B cell (primary cell): ENCODE measurements at regions of chr1 and their contacts with region 1.

Region 1: GRCh38 chr1:37692078-37692833 is at the start of gene CDCA8:
- DNase-seq: peak; percentile 99
- ATAC-seq: peak; percentile 89
- H3K4me3 ChIP-seq: peak within 1 kb of the TSS; percentile 52 to 91 (median 74)
- H3K4me3 Mint-ChIP-seq: peak within 1 kb of the TSS; percentile 99
- H3K27ac ChIP-seq: peak within 1 kb of the TSS; percentile 19 to 65
- H3K27ac Mint-ChIP-seq: peak within 1 kb of the TSS; percentile 94
- H3K4me1 ChIP-seq: peaks cover 19 to 34% of the 10 kb centered on the region in 2 donors
- H3K4me1 Mint-ChIP-seq: peaks cover 40% of the 10 kb centered on the region
- H3K27me3 ChIP-seq: no peaks in the 10 kb centered on the region
- H3K27me3 Mint-ChIP-seq: no peaks in the 10 kb centered on the region
- CTCF ChIP-seq: peak; percentile 67
- total RNA-seq, gene CDCA8: 1.3 and 1.5 TPM in 2 replicates

Region 2: GRCh38 chr1:37553927-37554808 is 138.1 kb before region 1 on chr1 and contains the start of gene SNIP1:
- CTCF ChIA-PET with region 1: no interaction called
- POLR2A ChIA-PET with region 1: interaction called, 8 read pairs
- intact Hi-C with region 1: loop called (anchors 1 kb)
- DNase-seq: peak; percentile 94
- ATAC-seq: peak; percentile 98
- H3K4me3 ChIP-seq: peak within 1 kb of the TSS; percentile 75 to 99 (median 93)
- H3K4me3 Mint-ChIP-seq: peak within 1 kb of the TSS; percentile 98
- H3K27ac ChIP-seq: peak within 1 kb of the TSS; percentile 82 to 96
- H3K27ac Mint-ChIP-seq: peak within 1 kb of the TSS; percentile 97
- H3K4me1 ChIP-seq: peaks cover 13 to 19% of the 10 kb centered on the region in 2 donors
- H3K4me1 Mint-ChIP-seq: peaks cover 33% of the 10 kb centered on the region
- H3K27me3 ChIP-seq: peaks cover 0 to 3% (median 0%) of the 10 kb centered on the region in 4 experiments
- H3K27me3 Mint-ChIP-seq: peaks cover 5% of the 10 kb centered on the region
- CTCF ChIP-seq: no peak
- total RNA-seq, gene SNIP1: 45.0 and 45.1 TPM in 2 replicates

Region 3: DNA sequence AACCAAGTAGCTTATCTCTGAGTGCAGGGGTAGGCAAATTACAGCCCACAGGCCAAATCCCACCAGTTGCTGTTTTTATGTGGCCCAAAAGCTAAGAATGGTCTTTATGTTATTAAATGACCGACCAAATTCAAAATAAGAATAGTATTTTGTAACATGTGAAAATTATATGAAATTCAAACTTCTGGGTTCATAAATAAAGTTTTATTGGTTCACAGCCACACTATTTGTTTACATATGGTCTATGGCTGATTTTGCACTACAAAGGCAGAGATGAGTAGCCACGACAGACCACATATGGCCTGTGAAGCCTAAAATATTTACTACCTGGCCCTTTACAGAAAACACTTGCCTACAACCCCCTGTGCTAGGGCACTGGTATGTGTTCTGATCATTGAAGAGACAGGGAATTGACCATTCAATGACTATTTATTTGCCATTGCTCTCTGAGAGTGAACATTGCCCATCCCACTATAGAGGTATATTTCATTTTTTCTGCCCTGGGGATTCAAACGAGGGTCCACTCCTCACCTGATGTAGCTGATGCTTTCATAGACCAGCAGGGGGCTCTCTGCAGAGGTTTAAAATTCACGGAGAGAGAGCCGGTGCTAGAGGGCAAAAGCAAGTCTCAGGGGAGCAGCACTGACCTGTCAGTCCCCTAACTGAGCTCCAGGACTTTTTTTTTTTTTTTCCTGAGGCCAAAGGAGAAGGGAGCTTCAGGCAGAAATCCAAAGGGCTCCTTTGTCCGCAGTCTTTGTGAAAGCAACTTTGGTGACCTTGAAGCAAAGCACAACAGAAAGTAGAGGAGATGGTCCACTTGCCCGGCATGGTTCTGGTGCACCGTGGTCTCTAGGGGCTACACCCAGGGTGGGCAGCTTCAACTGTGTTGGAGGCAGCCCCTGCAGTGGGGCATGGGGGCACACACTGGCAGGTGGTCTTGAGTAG is 89.2 kb before region 1 on chr1:
- CTCF ChIA-PET with region 1: interaction called, 328 read pairs
- POLR2A ChIA-PET with region 1: no interaction called
- intact Hi-C with region 1: no loop called
- DNase-seq: peak; percentile 66
- ATAC-seq: peak; percentile 64
- H3K4me3 ChIP-seq: no peak overlapping the region
- H3K4me3 Mint-ChIP-seq: no peak overlapping the region
- H3K27ac ChIP-seq: no peak overlapping the region
- H3K27ac Mint-ChIP-seq: no peak overlapping the region
- H3K4me1 ChIP-seq: peaks cover 4% of the 10 kb centered on the region in 2 donors
- H3K4me1 Mint-ChIP-seq: no peaks in the 10 kb centered on the region
- H3K27me3 ChIP-seq: peaks cover 0 to 3% (median 1%) of the 10 kb centered on the region in 4 experiments
- H3K27me3 Mint-ChIP-seq: peaks cover 12% of the 10 kb centered on the region
- CTCF ChIP-seq: peak; percentile 83

Region 4: GRCh38 chr1:37807555-37808368 is 115.5 kb after region 1 on chr1 and contains the starts of genes C1orf122 and YRDC:
- CTCF ChIA-PET with region 1: no interaction called
- POLR2A ChIA-PET with region 1: interaction called, 3 read pairs
- intact Hi-C with region 1: loop called (anchors 1 kb)
- DNase-seq: peak; percentile 91
- ATAC-seq: peak; percentile 90
- H3K4me3 ChIP-seq: peak within 1 kb of the TSS; percentile 78 to 88 (median 83)
- H3K4me3 Mint-ChIP-seq: peak within 1 kb of the TSS; percentile 98
- H3K27ac ChIP-seq: peak within 1 kb of the TSS; percentile 68 to 94
- H3K27ac Mint-ChIP-seq: peak within 1 kb of the TSS; percentile 98
- H3K4me1 ChIP-seq: peaks cover 14 to 31% of the 10 kb centered on the region in 2 donors
- H3K4me1 Mint-ChIP-seq: peaks cover 40% of the 10 kb centered on the region
- H3K27me3 ChIP-seq: no peaks in the 10 kb centered on the region
- H3K27me3 Mint-ChIP-seq: no peaks in the 10 kb centered on the region
- CTCF ChIP-seq: no peak
- total RNA-seq, gene C1orf122: 15.7 and 16.9 TPM in 2 replicates
- total RNA-seq, gene YRDC: 12.5 and 14.0 TPM in 2 replicates

Region 5: GRCh38 chr1:37931361-37932158 is 239.3 kb after region 1 on chr1:
- CTCF ChIA-PET with region 1: interaction called, 3 read pairs
- POLR2A ChIA-PET with region 1: no interaction called
- intact Hi-C with region 1: loop called (anchors 1 kb)
- DNase-seq: peak; percentile 97
- ATAC-seq: peak; percentile 99
- H3K4me3 ChIP-seq: peak overlapping the region; percentile 69 to 98 (median 97)
- H3K4me3 Mint-ChIP-seq: peak overlapping the region; percentile 89
- H3K27ac ChIP-seq: peak overlapping the region in 1 of 2 donors; percentile 80
- H3K27ac Mint-ChIP-seq: peak overlapping the region; percentile 83
- H3K4me1 ChIP-seq: peaks cover 18 to 28% of the 10 kb centered on the region in 2 donors
- H3K4me1 Mint-ChIP-seq: peaks cover 42% of the 10 kb centered on the region
- H3K27me3 ChIP-seq: no peaks in the 10 kb centered on the region
- H3K27me3 Mint-ChIP-seq: no peaks in the 10 kb centered on the region
- CTCF ChIP-seq: no peak